ENCODE measurements at regions of chr13 and their contacts with region 1.

Region 1: DNA sequence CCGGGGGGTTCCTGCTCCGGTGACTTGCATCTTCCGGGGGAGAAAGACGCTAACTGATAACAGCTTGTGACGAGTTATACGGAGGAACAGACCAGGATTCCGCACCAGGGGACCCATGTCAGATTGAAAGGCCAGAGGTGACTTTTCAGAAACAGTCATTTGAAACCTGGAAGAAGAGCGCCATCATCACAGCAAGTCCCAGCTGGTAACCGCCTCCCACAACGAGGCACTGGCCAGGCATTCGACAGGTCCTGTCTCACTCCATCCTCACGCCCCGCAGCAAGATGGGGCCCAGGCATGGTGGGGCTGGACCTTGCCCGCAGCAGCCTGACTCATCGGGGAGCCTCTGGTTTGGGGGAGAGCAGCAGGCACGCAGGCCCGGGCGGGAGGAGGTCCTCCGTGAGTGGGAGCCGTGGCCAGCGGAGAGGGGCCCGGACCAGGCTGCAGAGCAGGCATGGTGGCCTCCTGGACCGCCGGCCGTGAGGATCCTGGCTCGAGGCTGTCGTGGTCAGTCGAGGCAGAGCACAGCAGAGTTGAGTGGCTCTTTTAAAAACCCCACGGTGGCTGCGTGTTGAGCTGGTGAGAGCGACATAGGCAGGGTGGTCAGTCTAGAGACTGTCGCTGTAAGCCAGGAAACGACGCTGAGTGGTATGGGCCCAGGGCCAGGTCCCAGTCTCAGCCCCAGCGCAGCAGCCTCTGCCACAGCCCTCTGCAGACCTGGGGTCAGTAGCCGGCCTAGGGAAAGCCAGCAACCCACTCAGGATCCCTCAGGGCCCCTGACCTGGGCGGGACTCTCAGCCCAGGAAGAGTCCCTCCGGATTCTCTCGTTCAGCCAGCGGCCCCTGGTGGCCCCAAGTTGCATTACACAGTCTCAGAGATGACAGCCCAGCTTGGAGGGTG is 94.9 kb upstream of the MCF2L start:
- DNase-seq: no peak
- H3K4me3 ChIP-seq: no peak overlapping the region
- CTCF ChIP-seq: peak; percentile 88

Region 2: GRCh38 chr13:112616586-112617362 is 257.3 kb before region 1 on chr13:
- CTCF ChIA-PET with region 1: interaction called, 51 read pairs
- POLR2A ChIA-PET with region 1: no interaction called
- DNase-seq: no peak
- H3K4me3 ChIP-seq: no peak overlapping the region
- CTCF ChIP-seq: peak; percentile 70

Region 3: DNA sequence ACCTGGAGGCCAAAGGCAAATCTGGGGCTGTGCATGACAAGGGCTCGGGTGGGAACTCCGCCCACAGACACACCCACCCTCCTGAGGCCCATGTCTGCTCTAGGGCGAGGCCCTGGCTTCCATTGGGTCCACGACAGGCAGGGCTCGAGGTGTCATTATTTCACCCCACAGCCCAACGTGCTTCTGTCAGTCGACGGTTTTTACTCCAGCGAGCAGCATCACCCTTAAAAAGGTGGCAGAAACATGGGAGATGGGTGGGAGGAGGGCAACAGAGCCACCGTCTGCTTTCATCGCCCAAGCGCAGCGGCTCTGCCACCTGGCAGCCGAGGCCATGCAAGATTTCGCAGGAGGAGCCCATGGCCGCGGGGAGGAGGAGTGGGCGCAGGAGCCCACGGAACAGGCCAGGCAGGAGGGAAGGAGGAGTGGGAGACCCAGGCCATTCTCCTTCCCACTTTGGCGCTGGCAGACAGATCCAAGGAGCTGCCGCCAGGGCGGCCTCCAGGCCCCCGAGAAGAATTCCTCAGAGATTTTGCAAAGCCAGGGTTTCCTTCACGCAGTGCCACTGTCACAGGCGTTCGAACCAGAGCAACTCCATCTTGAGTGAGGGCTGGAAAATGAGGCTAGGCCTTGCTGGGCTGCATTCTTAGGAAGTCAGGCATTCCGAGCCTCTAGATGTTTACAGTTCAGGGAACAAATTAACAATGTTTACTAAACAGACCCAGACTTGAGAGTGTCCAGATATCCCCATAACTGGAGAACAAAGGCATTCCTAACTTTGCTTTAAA is 236.9 kb before region 1 on chr13:
- CTCF ChIA-PET with region 1: interaction called, 67 read pairs
- POLR2A ChIA-PET with region 1: no interaction called
- DNase-seq: no peak
- H3K4me3 ChIP-seq: no peak overlapping the region
- CTCF ChIP-seq: no peak

Region 4: GRCh38 chr13:112859817-112860190 is 14.3 kb before region 1 on chr13:
- CTCF ChIA-PET with region 1: interaction called, 28 read pairs
- POLR2A ChIA-PET with region 1: no interaction called
- DNase-seq: no peak
- H3K4me3 ChIP-seq: no peak overlapping the region
- CTCF ChIP-seq: no peak

Region 5: GRCh38 chr13:112885782-112886268 is 11.7 kb after region 1 on chr13:
- CTCF ChIA-PET with region 1: interaction called, 20 read pairs
- POLR2A ChIA-PET with region 1: no interaction called
- DNase-seq: no peak
- H3K4me3 ChIP-seq: no peak overlapping the region
- CTCF ChIP-seq: no peak

Region 6: GRCh38 chr13:113267642-113268405 is 393.7 kb after region 1 on chr13:
- CTCF ChIA-PET with region 1: no interaction called
- POLR2A ChIA-PET with region 1: no interaction called
- DNase-seq: no peak
- H3K4me3 ChIP-seq: no peak overlapping the region
- CTCF ChIP-seq: no peak